ENCODE measurements at regions of chr1 and their contacts with region 1.

Region 1: DNA sequence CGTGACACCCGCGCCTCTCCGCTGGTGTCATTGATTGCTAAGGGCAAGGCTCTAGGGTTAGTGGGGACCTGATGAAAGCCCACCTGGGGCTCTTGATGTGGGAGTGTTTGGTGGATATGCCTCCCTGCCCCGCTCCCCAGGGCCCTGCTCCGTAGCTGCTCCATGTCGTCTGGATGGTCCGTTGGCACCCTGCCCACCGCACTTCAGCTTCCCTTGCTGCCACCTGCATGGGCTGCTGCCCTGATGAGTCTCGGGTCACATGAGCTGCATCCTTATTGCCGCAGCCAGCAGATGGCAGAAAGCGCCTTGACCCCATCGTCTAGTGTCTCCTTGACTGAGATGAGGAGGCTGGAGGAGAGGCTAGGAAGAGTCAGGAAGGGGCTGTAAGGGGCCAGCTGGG is 439.4 kb downstream of the CAMTA1 start:
- DNase-seq: peak; percentile 17
- ATAC-seq: no peak
- H3K4me3 Mint-ChIP-seq: no peak overlapping the region
- H3K27ac Mint-ChIP-seq: no peak overlapping the region
- H3K4me1 Mint-ChIP-seq: no peaks in the 10 kb centered on the region
- H3K27me3 Mint-ChIP-seq: peaks cover 3% of the 10 kb centered on the region

Region 2: DNA sequence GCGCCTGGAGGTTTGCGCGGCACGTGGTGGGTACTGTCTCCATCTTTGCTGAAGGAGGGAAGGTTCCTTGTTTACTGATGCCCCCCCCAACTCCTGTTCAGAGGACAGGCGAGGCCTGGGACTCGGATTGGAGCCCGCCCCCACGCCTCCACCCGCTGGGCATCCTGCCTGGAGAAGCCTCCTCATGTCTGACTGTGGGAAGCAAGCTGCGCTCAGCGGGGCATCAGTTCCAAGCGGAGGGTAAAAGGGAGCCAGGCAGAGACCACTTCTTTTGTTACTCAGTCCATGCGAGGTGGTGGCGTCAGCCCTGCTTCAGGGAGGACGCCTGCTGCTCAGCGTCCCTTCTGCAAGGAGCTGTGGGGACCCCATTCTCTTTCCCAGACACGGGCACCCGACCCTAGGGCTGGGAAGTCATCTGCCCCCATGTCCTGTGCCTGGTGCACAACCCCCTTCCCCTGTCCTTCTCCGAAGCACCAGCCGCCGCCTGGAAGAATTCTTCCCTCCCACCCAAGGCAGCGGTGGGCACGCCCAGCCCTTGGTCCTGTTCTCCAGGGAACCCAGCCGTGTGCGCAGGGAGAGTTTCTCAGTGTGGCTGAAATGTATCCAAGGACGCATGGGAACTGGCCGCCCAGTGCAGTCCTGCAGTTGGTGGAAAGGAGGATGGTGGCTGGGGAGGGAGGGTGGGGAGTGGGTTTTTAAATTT is 25.4 kb before region 1 on chr1:
- CTCF ChIA-PET with region 1: no interaction called
- POLR2A ChIA-PET with region 1: no interaction called
- intact Hi-C with region 1: no loop called
- DNase-seq: no peak
- ATAC-seq: no peak
- H3K4me3 Mint-ChIP-seq: no peak overlapping the region
- H3K27ac Mint-ChIP-seq: no peak overlapping the region
- H3K4me1 Mint-ChIP-seq: peaks cover 2% of the 10 kb centered on the region
- H3K27me3 Mint-ChIP-seq: peaks cover 12% of the 10 kb centered on the region

Region 3: GRCh38 chr1:7646981-7647901 is 422.6 kb after region 1 on chr1:
- CTCF ChIA-PET with region 1: no interaction called
- POLR2A ChIA-PET with region 1: no interaction called
- intact Hi-C with region 1: loop called in 1 of 2 experiments (anchors 5 kb)
- DNase-seq: peak; percentile 85
- ATAC-seq: no peak
- H3K4me3 Mint-ChIP-seq: no peak overlapping the region
- H3K27ac Mint-ChIP-seq: no peak overlapping the region
- H3K4me1 Mint-ChIP-seq: no peaks in the 10 kb centered on the region
- H3K27me3 Mint-ChIP-seq: no peaks in the 10 kb centered on the region